Thyroid gland (tissue), 4 donors: ENCODE measurements at regions of chr15 and their contacts with region 1.

Region 1: GRCh38 chr15:65264863-65265430 is 21.7 kb downstream of the PARP16 start:
- DNase-seq: no peak
- H3K4me3 ChIP-seq: no peak overlapping the region
- H3K27ac ChIP-seq: no peak overlapping the region
- H3K4me1 ChIP-seq: no peaks in the 10 kb centered on the region
- H3K27me3 ChIP-seq: no peaks in the 10 kb centered on the region
- CTCF ChIP-seq: no peak
- POLR2A ChIP-seq: no peak

Region 2: GRCh38 chr15:65192016-65192415 is 72.9 kb before region 1 on chr15:
- intact Hi-C with region 1: loop called (anchors 5 kb)
- DNase-seq: no peak
- H3K4me3 ChIP-seq: no peak overlapping the region
- H3K27ac ChIP-seq: no peak overlapping the region
- H3K4me1 ChIP-seq: peaks cover 0 to 10% of the 10 kb centered on the region in 2 donors
- H3K27me3 ChIP-seq: no peaks in the 10 kb centered on the region
- CTCF ChIP-seq: no peak
- POLR2A ChIP-seq: no peak